GM12878 (cell line): ENCODE measurements at regions of chr14 and their contacts with region 1.

Region 1: DNA sequence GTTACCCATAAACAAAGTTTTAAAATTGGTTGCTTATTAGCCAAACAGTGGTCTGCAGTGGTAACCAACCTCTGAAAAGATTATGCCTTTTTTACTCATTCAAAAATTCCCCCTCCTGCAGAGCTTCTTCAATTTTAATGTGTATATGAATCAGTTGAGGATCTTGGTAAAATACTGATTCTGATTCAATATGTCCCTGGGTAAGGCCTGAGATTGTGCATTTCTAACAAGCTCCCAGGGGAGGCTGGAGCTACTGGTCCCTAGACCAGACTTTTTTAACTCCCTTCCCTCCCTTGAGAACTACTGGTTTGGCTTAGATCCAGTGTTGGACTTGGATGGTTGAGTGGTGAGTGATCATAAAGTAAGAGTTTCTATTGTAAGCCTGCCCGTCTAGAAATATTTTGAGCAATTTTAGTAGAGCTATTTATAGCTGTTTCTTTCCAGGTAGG is 90.2 kb downstream of the FUT8 start:
- DNase-seq: peak; percentile 62
- ATAC-seq: peak; percentile 79
- H3K4me3 ChIP-seq: no peak overlapping the region
- H3K27ac ChIP-seq: peak overlapping the region; percentile 65
- H3K4me1 ChIP-seq: peaks cover 21% of the 10 kb centered on the region; the same call in 1 of the 2 replicates
- H3K27me3 ChIP-seq: no peaks in the 10 kb centered on the region
- CTCF ChIP-seq: no peak
- EP300 ChIP-seq: peak; percentile 25 to 45; a peak in 1 of 4 replicates
- POLR2A ChIP-seq: no peak
- RAD21 ChIP-seq: no peak

Region 2: DNA sequence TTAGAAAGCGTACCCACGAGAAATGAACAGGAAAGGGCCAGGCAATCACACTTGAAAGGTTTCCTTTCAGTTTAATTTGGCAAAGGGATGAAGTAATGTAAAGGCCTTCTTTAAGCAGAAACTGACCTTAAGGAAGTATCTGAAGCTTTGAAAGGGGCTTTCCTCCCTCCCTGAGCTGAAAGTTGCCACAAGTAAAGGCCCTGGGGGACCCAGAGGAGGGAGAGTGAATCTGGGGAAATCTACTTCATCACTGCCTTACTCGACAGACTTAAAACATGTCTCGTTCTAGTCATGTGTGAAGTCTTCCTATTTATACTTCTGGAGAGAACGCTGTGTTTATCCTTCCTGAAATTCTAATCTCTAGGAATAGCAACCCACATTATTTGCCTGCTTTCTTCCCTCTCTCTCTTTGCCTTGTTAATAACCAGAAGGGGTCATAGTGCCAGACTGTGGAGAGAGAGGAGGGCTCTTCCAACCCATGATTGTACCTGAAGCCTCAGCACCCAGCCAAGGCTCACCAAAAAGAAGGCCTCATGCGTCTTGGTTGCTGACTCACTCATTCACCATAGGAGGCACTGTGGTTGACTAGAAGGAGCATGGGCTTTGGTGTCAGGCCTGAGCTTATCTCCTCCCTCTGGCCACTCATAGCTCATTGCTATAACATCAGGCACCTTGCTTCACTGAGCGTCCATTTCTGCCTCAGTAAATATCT is 549.9 kb before region 1 on chr14:
- CTCF ChIA-PET with region 1: no interaction called
- POLR2A ChIA-PET with region 1: no interaction called
- RAD21 ChIA-PET with region 1: no interaction called
- SMC1A ChIA-PET with region 1: no interaction called
- in situ Hi-C with region 1: no loop called
- intact Hi-C with region 1: no loop called
- DNase-seq: peak; percentile 32
- ATAC-seq: peak; percentile 87
- H3K4me3 ChIP-seq: no peak overlapping the region
- H3K27ac ChIP-seq: peak overlapping the region; percentile 41
- H3K4me1 ChIP-seq: peaks cover 19% of the 10 kb centered on the region
- H3K27me3 ChIP-seq: no peaks in the 10 kb centered on the region
- CTCF ChIP-seq: peak; percentile 15 to 25 (median 22); a peak in 4 of 6 replicates
- EP300 ChIP-seq: no peak
- POLR2A ChIP-seq: no peak
- RAD21 ChIP-seq: peak; percentile 35; the same call in 1 of the 2 replicates

Region 3: DNA sequence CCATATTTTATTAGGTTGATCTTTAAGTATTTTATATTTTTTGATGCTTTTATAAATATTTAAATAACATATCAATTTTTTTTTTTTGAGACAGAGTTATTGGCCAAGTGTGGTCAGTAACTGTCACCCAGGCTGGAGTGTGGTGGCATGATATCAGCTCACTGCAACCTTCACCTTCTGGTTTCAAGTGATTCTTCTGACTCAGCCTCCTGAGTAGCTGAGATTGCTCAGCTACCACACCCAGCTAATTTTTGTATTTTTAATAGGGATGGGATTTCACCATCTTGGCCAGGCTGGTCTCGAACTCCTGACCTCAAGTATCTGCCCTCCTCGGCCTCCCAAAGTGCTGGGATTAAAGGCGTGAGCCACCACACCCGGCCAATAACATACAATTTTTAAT is 19.1 kb before region 1 on chr14:
- CTCF ChIA-PET with region 1: interaction called, 62 read pairs
- POLR2A ChIA-PET with region 1: interaction called, 3 read pairs
- RAD21 ChIA-PET with region 1: interaction called, 7 read pairs
- SMC1A ChIA-PET with region 1: interaction called, 16 read pairs
- in situ Hi-C with region 1: no loop called
- intact Hi-C with region 1: no loop called
- DNase-seq: no peak
- ATAC-seq: peak; percentile 74
- H3K4me3 ChIP-seq: no peak overlapping the region
- H3K27ac ChIP-seq: no peak overlapping the region
- H3K4me1 ChIP-seq: peaks cover 15% of the 10 kb centered on the region
- H3K27me3 ChIP-seq: no peaks in the 10 kb centered on the region
- CTCF ChIP-seq: no peak
- EP300 ChIP-seq: no peak
- POLR2A ChIP-seq: no peak
- RAD21 ChIP-seq: no peak